GM10248 (cell line): ENCODE measurements at regions of chr20 and their contacts with region 1.

Region 1: GRCh38 chr20:46411637-46412036 is 5.2 kb upstream of the ELMO2 start:
- DNase-seq: no peak
- CTCF ChIP-seq: no peak

Region 2: GRCh38 chr20:46307139-46307998 is 104.3 kb before region 1 on chr20:
- CTCF ChIA-PET with region 1: interaction called, 31 read pairs
- POLR2A ChIA-PET with region 1: no interaction called
- DNase-seq: peak; percentile 94
- CTCF ChIP-seq: peak; percentile 95